Endothelial cell of umbilical vein (primary cell): ENCODE measurements at regions of chrX and their contacts with region 1.

Region 1: DNA sequence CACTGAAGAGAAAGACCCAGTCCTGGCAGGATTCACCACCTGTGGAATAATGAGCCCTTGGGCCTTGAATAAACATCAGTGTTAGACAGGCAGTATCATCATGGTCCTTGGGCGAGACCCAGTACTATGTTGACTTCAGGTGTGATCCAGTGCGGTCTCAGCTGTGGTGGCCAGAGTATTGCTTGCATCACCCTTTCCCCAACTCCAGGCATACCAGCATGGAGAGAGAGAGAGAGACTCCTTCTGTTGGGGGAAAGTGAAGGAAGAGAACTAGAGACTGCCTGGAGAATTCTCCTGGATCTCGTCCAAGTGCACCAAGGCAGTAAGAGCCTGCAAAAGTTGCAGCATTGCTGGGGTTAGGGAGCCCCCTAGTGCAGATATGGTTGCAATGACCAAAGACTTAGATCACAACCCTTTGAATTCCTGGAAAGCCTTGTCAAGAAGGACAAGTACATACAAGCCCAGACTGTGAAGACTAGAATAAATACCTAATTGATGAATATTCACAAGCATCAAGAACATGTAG is 61.1 kb upstream of the VAMP7 start:
- DNase-seq: peak; percentile 77
- H3K4me3 ChIP-seq: no peak overlapping the region
- H3K27ac ChIP-seq: no peak overlapping the region
- H3K4me1 ChIP-seq: no peaks in the 10 kb centered on the region
- H3K27me3 ChIP-seq: no peaks in the 10 kb centered on the region
- CTCF ChIP-seq: peak; percentile 40 to 61
- POLR2A ChIP-seq: no peak

Region 2: DNA sequence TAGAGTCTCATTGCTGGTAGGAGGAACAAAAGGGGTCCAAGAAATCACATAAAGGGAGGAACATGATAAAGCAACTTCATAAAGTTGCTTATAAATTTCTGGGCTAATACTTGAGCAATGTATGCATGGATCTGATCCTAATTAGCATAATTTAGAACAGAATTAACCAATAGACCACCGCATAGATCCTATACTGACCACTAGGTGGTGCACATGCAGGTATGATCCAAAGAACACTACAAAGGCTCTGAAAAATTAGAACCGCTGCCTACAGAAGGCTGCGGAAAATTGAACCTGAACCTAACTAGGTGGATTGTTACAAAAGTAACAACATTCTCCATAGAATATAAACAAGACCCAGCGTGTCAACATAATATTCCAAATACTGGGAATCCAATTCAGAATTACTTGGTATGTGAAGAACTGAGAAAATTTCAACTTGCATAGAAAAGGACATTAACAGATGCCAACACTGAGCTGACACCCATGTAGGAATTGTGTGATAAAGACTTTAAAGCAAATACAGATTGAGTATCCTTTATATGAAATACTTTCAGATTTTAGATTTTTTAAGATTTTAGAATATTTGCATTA is 725.5 kb before region 1 on chrX:
- CTCF ChIA-PET with region 1: no interaction called
- POLR2A ChIA-PET with region 1: no interaction called
- dilution Hi-C with region 1: no loop called
- intact Hi-C with region 1: loop called (anchors 1 kb)
- DNase-seq: peak; percentile 27
- H3K4me3 ChIP-seq: no peak overlapping the region
- H3K27ac ChIP-seq: no peak overlapping the region
- H3K4me1 ChIP-seq: no peaks in the 10 kb centered on the region
- H3K27me3 ChIP-seq: no peaks in the 10 kb centered on the region
- CTCF ChIP-seq: peak; percentile 42 to 49
- POLR2A ChIP-seq: no peak

Region 3: GRCh38 chrX:155577681-155578080 is 242.3 kb before region 1 on chrX:
- CTCF ChIA-PET with region 1: no interaction called
- POLR2A ChIA-PET with region 1: no interaction called
- dilution Hi-C with region 1: no loop called
- intact Hi-C with region 1: no loop called
- DNase-seq: no peak
- H3K4me3 ChIP-seq: no peak overlapping the region
- H3K27ac ChIP-seq: no peak overlapping the region
- H3K4me1 ChIP-seq: no peaks in the 10 kb centered on the region
- H3K27me3 ChIP-seq: no peaks in the 10 kb centered on the region
- CTCF ChIP-seq: no peak
- POLR2A ChIP-seq: no peak

Region 4: GRCh38 chrX:155662282-155662681 is 157.7 kb before region 1 on chrX:
- CTCF ChIA-PET with region 1: no interaction called
- POLR2A ChIA-PET with region 1: no interaction called
- dilution Hi-C with region 1: no loop called
- intact Hi-C with region 1: loop called (anchors 1 kb)
- DNase-seq: no peak
- H3K4me3 ChIP-seq: no peak overlapping the region
- H3K27ac ChIP-seq: no peak overlapping the region
- H3K4me1 ChIP-seq: no peaks in the 10 kb centered on the region
- H3K27me3 ChIP-seq: no peaks in the 10 kb centered on the region
- CTCF ChIP-seq: no peak
- POLR2A ChIP-seq: no peak